HAP-1 (cell line): ENCODE measurements at regions of chr4 and their contacts with region 1.

Region 1: DNA sequence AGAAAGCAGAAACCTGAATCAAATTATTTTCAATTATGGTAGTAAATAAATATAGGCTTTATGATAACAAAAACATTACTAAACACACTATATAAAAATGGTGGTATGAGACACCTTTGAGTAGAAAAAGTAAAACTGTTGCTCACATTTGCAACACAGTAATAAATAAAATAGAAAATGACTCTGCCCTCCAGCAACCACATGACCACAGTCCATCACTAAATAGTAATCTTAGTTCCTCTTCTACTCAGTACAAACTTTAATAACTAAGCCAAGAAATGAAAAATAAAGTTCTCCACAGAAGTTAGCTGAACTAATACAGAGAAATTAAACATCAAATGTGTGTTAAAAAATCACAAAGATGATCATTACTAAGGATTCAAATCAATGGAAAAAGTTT is 108.5 kb downstream of the ADGRA3 start:
- DNase-seq: no peak
- H3K4me3 ChIP-seq: no peak overlapping the region
- H3K4me1 ChIP-seq: no peaks in the 10 kb centered on the region
- H3K27me3 ChIP-seq: no peaks in the 10 kb centered on the region

Region 2: GRCh38 chr4:22614114-22614513 is 206.8 kb after region 1 on chr4:
- in situ Hi-C with region 1: loop called (anchors 10 kb)
- DNase-seq: no peak
- H3K4me3 ChIP-seq: no peak overlapping the region
- H3K4me1 ChIP-seq: peaks cover 10% of the 10 kb centered on the region
- H3K27me3 ChIP-seq: no peaks in the 10 kb centered on the region

Region 3: GRCh38 chr4:22692736-22693135 is 285.4 kb after region 1 on chr4 and contains the start of gene GBA3:
- in situ Hi-C with region 1: loop called (anchors 10 kb)
- DNase-seq: no peak
- H3K4me3 ChIP-seq: no peak within 1 kb of the TSS
- H3K4me1 ChIP-seq: 0 out of 2 replicates have a peak, but pooled peaks cover 2% of the 10 kb centered on the region
- H3K27me3 ChIP-seq: peaks cover 29% of the 10 kb centered on the region